B cell (primary cell): ENCODE measurements at regions of chr19 and their contacts with region 1.

Region 1: DNA sequence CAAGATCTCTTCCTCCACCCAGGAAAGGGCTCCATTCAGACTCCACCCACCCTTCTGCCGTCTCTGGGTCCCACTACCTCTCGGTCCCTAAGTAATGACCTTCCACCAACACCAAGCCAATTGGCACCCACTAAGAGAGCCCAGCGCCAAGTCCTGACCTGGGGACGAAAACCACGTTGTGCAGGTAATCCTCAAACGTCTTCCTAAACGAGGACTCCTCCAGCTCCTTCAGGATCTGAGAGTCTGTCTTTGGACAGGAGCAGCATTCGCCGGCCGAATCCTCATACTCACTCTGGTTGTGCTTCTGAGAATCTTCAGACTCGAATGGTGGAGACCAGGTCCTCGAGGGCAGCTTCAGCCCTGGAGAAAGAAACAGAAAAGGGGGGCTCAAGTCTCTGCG is 83.1 kb downstream of the ZNF557 start:
- DNase-seq: no peak
- ATAC-seq: no peak
- H3K4me3 ChIP-seq: no peak overlapping the region
- H3K4me3 Mint-ChIP-seq: no peak overlapping the region
- H3K27ac ChIP-seq: no peak overlapping the region
- H3K27ac Mint-ChIP-seq: peak overlapping the region; percentile 50
- H3K4me1 ChIP-seq: peaks cover 0 to 6% of the 10 kb centered on the region in 2 donors
- H3K4me1 Mint-ChIP-seq: peaks cover 2% of the 10 kb centered on the region
- H3K27me3 ChIP-seq: no peaks in the 10 kb centered on the region
- H3K27me3 Mint-ChIP-seq: no peaks in the 10 kb centered on the region
- CTCF ChIP-seq: no peak

Region 2: DNA sequence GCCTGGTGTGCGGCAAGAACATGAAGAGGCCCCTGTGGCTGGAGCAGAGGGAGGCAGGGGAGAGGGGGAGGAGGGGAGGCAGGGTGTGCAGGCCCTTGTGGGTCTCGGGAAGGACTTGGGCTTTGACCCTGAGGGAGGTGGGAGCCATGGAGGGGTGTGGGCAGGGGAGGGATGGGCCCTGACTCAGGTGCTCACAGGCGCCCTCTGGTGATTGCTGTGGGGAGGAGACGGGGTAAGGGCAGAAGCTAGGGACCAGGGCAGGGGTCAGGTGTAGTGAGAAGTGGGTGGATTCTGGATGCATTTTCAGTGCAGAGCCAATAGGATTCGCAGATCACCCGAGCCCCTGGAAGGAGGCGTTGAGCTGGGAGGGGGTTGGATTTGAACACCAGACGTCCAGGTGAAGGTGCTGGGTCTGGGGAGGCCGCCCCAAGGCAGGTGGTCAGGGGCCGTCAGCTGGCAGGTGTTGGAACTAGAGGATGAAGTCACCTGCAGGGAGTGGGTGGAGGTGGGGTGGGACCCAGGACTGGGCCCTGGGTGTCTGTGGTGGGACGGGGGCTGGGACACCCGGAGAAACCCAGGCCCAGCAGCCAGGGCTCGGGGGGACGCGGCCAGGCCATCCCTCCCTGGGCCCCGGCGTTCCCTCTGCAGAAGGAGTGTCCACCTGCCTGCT is 1998.3 kb before region 1 on chr19:
- CTCF ChIA-PET with region 1: no interaction called
- POLR2A ChIA-PET with region 1: interaction called, 10 read pairs
- intact Hi-C with region 1: no loop called
- DNase-seq: peak; percentile 76
- ATAC-seq: peak; percentile 69
- H3K4me3 ChIP-seq: no peak overlapping the region
- H3K4me3 Mint-ChIP-seq: no peak overlapping the region
- H3K27ac ChIP-seq: no peak overlapping the region
- H3K27ac Mint-ChIP-seq: peak overlapping the region; percentile 67
- H3K4me1 ChIP-seq: peaks cover 0 to 9% of the 10 kb centered on the region in 2 donors
- H3K4me1 Mint-ChIP-seq: peaks cover 13% of the 10 kb centered on the region
- H3K27me3 ChIP-seq: no peaks in the 10 kb centered on the region
- H3K27me3 Mint-ChIP-seq: no peaks in the 10 kb centered on the region
- CTCF ChIP-seq: peak; percentile 72

Region 3: GRCh38 chr19:7177926-7178325 is 25.4 kb after region 1 on chr19:
- CTCF ChIA-PET with region 1: interaction called, 6 read pairs
- POLR2A ChIA-PET with region 1: interaction called, 4 read pairs
- intact Hi-C with region 1: loop called (anchors 2 kb)
- DNase-seq: no peak
- ATAC-seq: no peak
- H3K4me3 ChIP-seq: no peak overlapping the region
- H3K4me3 Mint-ChIP-seq: no peak overlapping the region
- H3K27ac ChIP-seq: no peak overlapping the region
- H3K27ac Mint-ChIP-seq: peak overlapping the region; percentile 46
- H3K4me1 ChIP-seq: peaks cover 26 to 33% of the 10 kb centered on the region in 2 donors
- H3K4me1 Mint-ChIP-seq: peaks cover 40% of the 10 kb centered on the region
- H3K27me3 ChIP-seq: no peaks in the 10 kb centered on the region
- H3K27me3 Mint-ChIP-seq: peaks cover 5% of the 10 kb centered on the region
- CTCF ChIP-seq: no peak

Region 4: DNA sequence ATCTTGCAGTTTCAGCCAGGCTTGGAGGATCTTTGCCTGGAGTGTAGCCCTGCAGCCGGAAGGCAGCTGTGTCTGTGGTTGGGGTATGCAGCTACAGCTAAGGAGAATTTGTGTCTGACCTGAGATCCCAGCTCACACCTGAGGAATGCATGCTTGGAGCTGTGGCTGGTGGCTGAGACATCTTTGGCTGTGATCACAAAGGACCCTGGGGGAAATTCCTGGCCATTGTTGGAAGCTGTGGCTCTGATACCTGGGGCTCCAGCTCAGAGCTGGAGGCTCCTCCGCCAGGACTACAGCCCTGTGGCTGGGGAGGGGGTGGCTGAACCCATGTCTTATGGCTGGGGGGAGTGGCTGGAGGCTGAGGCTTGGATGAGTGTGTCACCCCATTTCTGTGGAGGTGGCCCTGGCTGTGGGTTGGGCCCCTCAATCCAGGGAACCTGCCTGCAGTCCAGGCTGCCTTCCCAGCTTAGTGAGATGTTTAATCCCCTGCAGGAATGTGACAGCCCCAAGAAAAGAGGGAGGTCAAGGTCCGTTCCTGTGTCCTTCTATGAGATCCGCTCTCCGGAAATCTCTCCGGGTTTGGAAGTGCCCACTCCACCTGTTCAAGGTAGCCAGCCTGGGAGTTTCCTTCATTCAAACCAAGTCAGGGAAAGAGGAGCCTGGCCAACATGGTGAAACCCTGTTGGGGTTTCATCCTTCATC is 223.7 kb after region 1 on chr19:
- CTCF ChIA-PET with region 1: interaction called, 11 read pairs
- POLR2A ChIA-PET with region 1: no interaction called
- intact Hi-C with region 1: loop called (anchors 1 kb)
- DNase-seq: no peak
- ATAC-seq: no peak
- H3K4me3 ChIP-seq: no peak overlapping the region
- H3K4me3 Mint-ChIP-seq: no peak overlapping the region
- H3K27ac ChIP-seq: no peak overlapping the region
- H3K27ac Mint-ChIP-seq: peak overlapping the region; percentile 26
- H3K4me1 ChIP-seq: peaks cover 0 to 5% of the 10 kb centered on the region in 2 donors
- H3K4me1 Mint-ChIP-seq: peaks cover 10% of the 10 kb centered on the region
- H3K27me3 ChIP-seq: no peaks in the 10 kb centered on the region
- H3K27me3 Mint-ChIP-seq: no peaks in the 10 kb centered on the region
- CTCF ChIP-seq: no peak

Region 5: GRCh38 chr19:7382694-7383093 is 230.1 kb after region 1 on chr19:
- CTCF ChIA-PET with region 1: interaction called, 11 read pairs
- POLR2A ChIA-PET with region 1: no interaction called
- intact Hi-C with region 1: loop called (anchors 1 kb)
- DNase-seq: no peak
- ATAC-seq: no peak
- H3K4me3 ChIP-seq: no peak overlapping the region
- H3K4me3 Mint-ChIP-seq: no peak overlapping the region
- H3K27ac ChIP-seq: peak overlapping the region in 1 of 2 donors; percentile 52
- H3K27ac Mint-ChIP-seq: peak overlapping the region; percentile 37
- H3K4me1 ChIP-seq: peaks cover 0 to 12% of the 10 kb centered on the region in 2 donors
- H3K4me1 Mint-ChIP-seq: peaks cover 20% of the 10 kb centered on the region
- H3K27me3 ChIP-seq: no peaks in the 10 kb centered on the region
- H3K27me3 Mint-ChIP-seq: no peaks in the 10 kb centered on the region
- CTCF ChIP-seq: no peak